MCF 10A (cell line): ENCODE measurements at regions of chr5 and their contacts with region 1.

Region 1: DNA sequence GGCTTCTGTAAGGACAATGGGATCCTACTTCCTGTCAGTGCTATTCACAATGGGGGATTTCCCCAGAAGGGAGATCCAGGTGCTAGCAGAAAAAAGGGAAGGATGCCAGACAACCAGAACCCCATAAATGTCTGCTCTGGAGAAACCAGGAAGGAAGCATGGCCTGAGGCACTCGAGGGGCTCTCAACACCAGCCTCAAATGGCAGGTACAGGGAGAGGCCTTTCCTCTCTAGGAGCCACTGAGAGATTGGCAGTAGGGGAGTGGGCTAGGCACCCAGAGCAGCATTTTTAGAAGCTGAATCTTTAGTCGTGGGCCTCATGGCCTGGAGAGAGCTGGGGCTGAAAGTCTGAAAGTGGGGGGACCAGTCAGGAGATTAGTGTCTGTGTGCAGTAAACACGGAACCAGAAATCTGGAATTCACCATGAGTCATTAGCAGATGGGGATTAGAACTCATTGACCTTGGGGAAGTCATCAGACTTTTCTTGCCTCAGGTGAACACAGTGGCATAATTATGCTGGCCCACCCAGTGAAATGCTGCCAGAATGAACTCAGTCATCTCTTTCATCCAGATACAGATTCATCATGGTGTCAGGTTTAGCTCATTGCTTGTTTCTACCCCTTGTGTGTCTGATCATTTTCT is 28.3 kb downstream of the ARHGEF28 start:
- DNase-seq: peak; percentile 63
- H3K4me3 Mint-ChIP-seq: no peak overlapping the region
- H3K27ac Mint-ChIP-seq: peak overlapping the region; percentile 95
- H3K4me1 Mint-ChIP-seq: peaks cover 53% of the 10 kb centered on the region
- H3K27me3 Mint-ChIP-seq: no peaks in the 10 kb centered on the region
- CTCF ChIP-seq: no peak

Region 2: DNA sequence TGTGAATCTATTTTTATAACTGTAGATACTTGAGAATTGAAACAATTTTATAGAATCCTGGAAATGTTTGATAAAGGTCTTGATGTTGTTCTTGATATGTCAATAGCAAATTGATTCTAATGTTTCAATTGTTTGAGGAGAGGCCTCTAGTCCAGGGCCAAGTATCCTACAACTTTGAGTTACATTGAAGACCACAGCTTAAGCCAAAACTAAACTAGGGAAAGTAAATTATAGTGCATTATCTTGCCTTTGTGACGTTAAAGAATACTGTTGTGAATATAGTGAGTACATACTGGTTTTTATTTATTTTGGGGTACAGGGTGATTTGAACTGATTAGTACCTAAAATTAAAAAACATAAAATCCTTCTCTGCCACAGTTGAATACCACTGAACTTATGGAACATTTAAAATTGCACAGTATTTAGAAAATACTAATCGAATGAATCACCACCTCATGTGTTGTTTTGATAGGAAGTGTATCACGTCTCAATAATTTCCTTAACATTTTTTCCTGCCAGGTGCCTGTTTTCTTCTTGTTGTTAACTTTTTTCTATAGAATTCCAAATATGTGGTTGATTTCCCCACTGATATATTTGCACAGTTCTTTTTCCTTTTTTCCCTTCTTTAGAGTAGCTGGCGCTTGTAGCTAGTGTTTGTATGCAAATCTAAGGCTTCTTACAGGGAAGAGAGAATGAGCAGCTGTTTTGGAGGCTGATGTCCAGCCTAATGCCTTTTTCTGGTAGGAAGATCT is 15.8 kb before region 1 on chr5:
- CTCF ChIA-PET with region 1: interaction called, 5 read pairs
- POLR2A ChIA-PET with region 1: interaction called, 18 read pairs
- intact Hi-C with region 1: no loop called
- DNase-seq: peak; percentile 52
- H3K4me3 Mint-ChIP-seq: peak overlapping the region; percentile 33
- H3K27ac Mint-ChIP-seq: peak overlapping the region; percentile 87
- H3K4me1 Mint-ChIP-seq: peaks cover 45% of the 10 kb centered on the region
- H3K27me3 Mint-ChIP-seq: no peaks in the 10 kb centered on the region
- CTCF ChIP-seq: no peak

Region 3: DNA sequence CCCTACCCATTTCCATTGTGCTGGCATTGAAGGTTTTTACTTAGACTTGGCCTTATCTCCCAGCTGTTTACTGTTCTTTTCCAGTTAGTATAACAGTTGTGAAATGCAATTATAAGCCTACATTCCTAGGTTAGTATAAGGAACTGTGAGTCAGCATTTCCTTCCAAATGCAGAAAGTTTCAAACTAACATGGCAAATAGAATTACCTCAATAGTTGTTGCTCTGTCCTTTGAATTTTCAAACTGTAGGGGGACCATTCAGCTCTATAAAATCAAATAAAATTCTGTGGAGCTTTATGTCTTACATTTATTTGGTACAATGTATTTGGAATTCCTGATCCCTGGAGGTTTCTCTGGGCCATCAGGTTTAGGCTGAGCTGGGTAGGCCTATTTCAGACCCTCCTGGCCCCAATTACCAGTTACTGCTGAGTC is 18.9 kb after region 1 on chr5:
- CTCF ChIA-PET with region 1: interaction called, 4 read pairs
- POLR2A ChIA-PET with region 1: interaction called, 18 read pairs
- intact Hi-C with region 1: no loop called
- DNase-seq: peak; percentile 70
- H3K4me3 Mint-ChIP-seq: no peak overlapping the region
- H3K27ac Mint-ChIP-seq: peak overlapping the region; percentile 96
- H3K4me1 Mint-ChIP-seq: peaks cover 34% of the 10 kb centered on the region
- H3K27me3 Mint-ChIP-seq: no peaks in the 10 kb centered on the region
- CTCF ChIP-seq: no peak

Region 4: GRCh38 chr5:73722231-73722630 is 67.9 kb after region 1 on chr5:
- CTCF ChIA-PET with region 1: no interaction called
- POLR2A ChIA-PET with region 1: no interaction called
- intact Hi-C with region 1: no loop called
- DNase-seq: no peak
- H3K4me3 Mint-ChIP-seq: no peak overlapping the region
- H3K27ac Mint-ChIP-seq: no peak overlapping the region
- H3K4me1 Mint-ChIP-seq: peaks cover 11% of the 10 kb centered on the region
- H3K27me3 Mint-ChIP-seq: no peaks in the 10 kb centered on the region
- CTCF ChIP-seq: no peak

Region 5: DNA sequence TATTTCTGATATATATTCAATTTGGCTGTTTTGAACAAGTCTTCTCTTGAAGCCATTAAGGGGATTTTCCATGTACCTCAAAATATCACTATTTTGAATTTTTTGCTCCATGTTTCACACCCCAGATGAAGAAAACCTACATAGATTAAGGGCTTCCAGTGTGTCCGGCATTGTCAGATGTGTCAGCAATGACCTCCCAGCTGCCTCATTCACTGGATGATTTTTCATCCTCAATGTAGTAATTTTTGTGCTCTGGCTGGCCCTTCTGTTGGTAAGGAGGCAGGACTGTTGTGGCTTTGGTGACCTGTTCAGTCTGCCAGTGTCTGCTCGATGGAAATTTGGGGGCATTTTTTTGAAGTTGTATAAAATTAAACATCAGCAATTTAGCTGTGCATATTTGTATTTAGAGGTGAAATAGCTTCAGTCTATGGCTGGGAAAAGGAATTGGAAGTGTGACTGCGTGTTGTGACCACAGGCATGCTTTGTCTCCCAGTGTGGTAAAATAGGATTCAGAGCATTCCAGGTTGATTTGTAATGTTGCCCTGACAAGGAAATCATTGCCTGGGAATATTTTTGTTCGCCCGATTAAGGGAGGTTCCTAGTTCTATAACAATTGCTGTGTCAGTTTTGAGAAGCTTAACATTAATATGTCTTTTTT is 284.1 kb after region 1 on chr5:
- CTCF ChIA-PET with region 1: no interaction called
- POLR2A ChIA-PET with region 1: no interaction called
- intact Hi-C with region 1: no loop called
- DNase-seq: peak; percentile 91
- H3K4me3 Mint-ChIP-seq: peak overlapping the region; percentile 60
- H3K27ac Mint-ChIP-seq: peak overlapping the region; percentile 98
- H3K4me1 Mint-ChIP-seq: peaks cover 47% of the 10 kb centered on the region
- H3K27me3 Mint-ChIP-seq: no peaks in the 10 kb centered on the region
- CTCF ChIP-seq: no peak

Region 6: GRCh38 chr5:74017786-74018211 is 363.5 kb after region 1 on chr5:
- CTCF ChIA-PET with region 1: no interaction called
- POLR2A ChIA-PET with region 1: no interaction called
- intact Hi-C with region 1: no loop called
- DNase-seq: peak; percentile 91
- H3K4me3 Mint-ChIP-seq: no peak overlapping the region
- H3K27ac Mint-ChIP-seq: no peak overlapping the region
- H3K4me1 Mint-ChIP-seq: peaks cover 16% of the 10 kb centered on the region
- H3K27me3 Mint-ChIP-seq: no peaks in the 10 kb centered on the region
- CTCF ChIP-seq: no peak